CD8-positive, alpha-beta memory T cell (primary cell): ENCODE measurements at regions of chr2 and their contacts with region 1.

Region 1: DNA sequence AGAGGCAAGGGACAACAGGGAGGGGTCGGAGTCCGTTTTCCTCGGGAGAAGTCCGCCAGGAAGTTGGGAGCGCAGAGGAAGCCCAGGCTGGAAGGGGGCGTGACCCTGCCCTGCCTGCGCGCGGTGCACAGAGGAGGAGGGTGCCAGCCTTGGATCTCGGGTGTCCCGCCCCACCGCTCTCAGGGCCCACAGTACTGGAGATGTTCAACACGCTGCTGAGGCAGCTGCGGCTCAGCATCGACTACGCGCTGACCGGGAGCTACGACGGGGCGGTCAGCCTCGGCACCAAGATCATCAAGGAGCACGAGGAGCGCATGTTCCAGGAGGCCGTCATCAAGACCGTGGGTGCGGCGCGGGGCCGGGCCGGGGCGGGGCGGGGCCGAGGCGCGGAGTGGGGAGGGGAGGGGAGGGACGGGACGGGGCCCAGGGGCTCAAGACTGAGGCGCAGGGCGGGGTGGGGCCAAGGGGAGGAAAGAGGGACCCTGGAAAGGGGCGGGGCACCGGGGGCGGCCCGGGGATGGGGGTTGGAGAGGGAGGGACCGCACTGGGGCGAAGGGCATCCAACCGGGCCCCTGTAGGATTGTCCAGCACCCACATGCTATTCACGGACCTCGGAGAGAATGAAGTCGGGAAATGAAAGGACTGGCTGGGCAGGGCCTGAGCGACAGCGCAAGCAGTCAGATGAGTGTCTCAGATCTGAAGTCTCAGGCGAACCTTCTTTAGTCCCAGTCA is 36.6 kb downstream of the POMC start:
- DNase-seq: peak in 1 of 5 donors; percentile 10
- H3K4me3 ChIP-seq: no peak overlapping the region
- H3K4me3 Mint-ChIP-seq: peak overlapping the region in 6 of 7 donors; percentile 24 to 76 (median 56)
- H3K27ac ChIP-seq: no peak overlapping the region
- H3K27ac Mint-ChIP-seq: peak overlapping the region in 2 of 8 donors; percentile 27 to 63
- H3K4me1 ChIP-seq: no peaks in the 10 kb centered on the region
- H3K4me1 Mint-ChIP-seq: peaks cover 10 to 14% (median 11%) of the 10 kb centered on the region in 3 donors
- H3K27me3 ChIP-seq: peaks cover 40% of the 10 kb centered on the region
- H3K27me3 Mint-ChIP-seq: peaks cover 42 to 61% of the 10 kb centered on the region in 2 donors

Region 2: GRCh38 chr2:24409700-24410556 is 721.8 kb before region 1 on chr2:
- CTCF ChIA-PET with region 1: interaction called, 23 read pairs
- POLR2A ChIA-PET with region 1: no interaction called
- DNase-seq: peak in 4 of 5 donors; percentile 20 to 59 (median 46)
- H3K4me3 ChIP-seq: no peak overlapping the region
- H3K4me3 Mint-ChIP-seq: no peak overlapping the region
- H3K27ac ChIP-seq: no peak overlapping the region
- H3K27ac Mint-ChIP-seq: no peak overlapping the region
- H3K4me1 ChIP-seq: no peaks in the 10 kb centered on the region
- H3K4me1 Mint-ChIP-seq: peaks cover 0 to 2% (median 0%) of the 10 kb centered on the region in 3 donors
- H3K27me3 ChIP-seq: no peaks in the 10 kb centered on the region
- H3K27me3 Mint-ChIP-seq: peaks cover 6 to 19% of the 10 kb centered on the region in 2 donors

Region 3: GRCh38 chr2:24971536-24972314 is 160.0 kb before region 1 on chr2 and contains the start of gene DNAJC27:
- CTCF ChIA-PET with region 1: interaction called, 59 read pairs
- POLR2A ChIA-PET with region 1: interaction called, 4 read pairs
- DNase-seq: peak; percentile 96 to 99 (median 98)
- H3K4me3 ChIP-seq: peak within 1 kb of the TSS; percentile 64
- H3K4me3 Mint-ChIP-seq: peak within 1 kb of the TSS; percentile 94 to 98 (median 98)
- H3K27ac ChIP-seq: peak within 1 kb of the TSS; percentile 99
- H3K27ac Mint-ChIP-seq: peak within 1 kb of the TSS; percentile 99 to 100 (median 100)
- H3K4me1 ChIP-seq: peaks cover 13% of the 10 kb centered on the region
- H3K4me1 Mint-ChIP-seq: peaks cover 22 to 36% (median 27%) of the 10 kb centered on the region in 3 donors
- H3K27me3 ChIP-seq: no peaks in the 10 kb centered on the region
- H3K27me3 Mint-ChIP-seq: peaks cover 0 to 2% of the 10 kb centered on the region in 2 donors
- total RNA-seq, gene DNAJC27: 4.4 to 4.7 TPM